ENCODE measurements at regions of chr6 and their contacts with region 1.

Region 1: DNA sequence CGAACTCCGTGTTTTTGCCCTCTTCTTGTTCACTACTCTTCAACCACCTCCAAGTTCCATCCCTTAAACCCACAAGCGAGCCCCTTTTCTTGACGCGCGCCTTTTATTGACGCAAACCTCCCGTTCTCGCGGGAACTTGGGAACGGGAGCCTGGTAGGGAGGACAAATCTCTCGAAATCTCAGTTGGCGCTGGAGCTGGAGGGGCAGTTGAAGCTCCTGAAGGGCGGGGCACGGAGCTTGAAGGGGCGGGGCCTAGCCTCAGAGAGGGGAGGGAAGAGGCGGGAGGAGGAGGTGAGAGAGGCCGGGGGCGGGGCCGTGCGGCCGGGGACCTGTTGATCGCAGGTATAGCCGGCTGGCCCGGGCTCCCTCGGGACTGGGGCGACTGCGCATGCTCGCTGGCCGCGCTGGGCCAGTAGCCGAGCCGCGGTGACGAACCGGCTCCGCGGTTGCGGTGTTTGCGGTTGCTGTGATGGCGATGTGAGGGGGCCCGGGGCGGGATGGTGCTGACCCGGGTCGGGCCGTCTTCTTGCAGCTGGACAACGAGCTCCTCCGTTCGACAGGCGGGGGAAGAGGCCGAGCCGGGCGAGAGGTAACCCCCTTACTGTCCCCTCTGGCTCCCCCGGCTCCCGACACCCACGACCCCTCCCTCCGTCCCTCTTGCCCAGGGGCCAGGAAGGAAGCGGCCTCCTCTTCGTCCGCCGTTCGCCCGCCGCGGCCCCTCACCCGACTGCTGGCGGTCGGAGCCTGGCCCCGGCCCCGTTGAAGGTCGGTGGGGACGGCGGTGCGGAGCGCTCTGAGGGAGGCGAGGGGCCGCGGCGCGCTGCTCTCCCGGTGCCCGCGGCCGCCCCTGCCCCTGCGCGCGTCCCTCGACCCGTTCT is at the start of gene FAM135A:
- DNase-seq: peak; percentile 99 to 100
- H3K4me3 ChIP-seq: peak within 1 kb of the TSS; percentile 91 to 100 (median 100)
- H3K27ac ChIP-seq: peak within 1 kb of the TSS; percentile 94
- H3K4me1 ChIP-seq: no peaks in the 10 kb centered on the region; a peak in 1 of 7 replicates
- H3K27me3 ChIP-seq: no peaks in the 10 kb centered on the region
- CTCF ChIP-seq: no peak
- EP300 ChIP-seq: no peak
- POLR2A ChIP-seq: peak; percentile 99 to 100
- RAD21 ChIP-seq: no peak
- total RNA-seq, gene FAM135A: 34.7 and 35.7 TPM in 2 replicates

Region 2: DNA sequence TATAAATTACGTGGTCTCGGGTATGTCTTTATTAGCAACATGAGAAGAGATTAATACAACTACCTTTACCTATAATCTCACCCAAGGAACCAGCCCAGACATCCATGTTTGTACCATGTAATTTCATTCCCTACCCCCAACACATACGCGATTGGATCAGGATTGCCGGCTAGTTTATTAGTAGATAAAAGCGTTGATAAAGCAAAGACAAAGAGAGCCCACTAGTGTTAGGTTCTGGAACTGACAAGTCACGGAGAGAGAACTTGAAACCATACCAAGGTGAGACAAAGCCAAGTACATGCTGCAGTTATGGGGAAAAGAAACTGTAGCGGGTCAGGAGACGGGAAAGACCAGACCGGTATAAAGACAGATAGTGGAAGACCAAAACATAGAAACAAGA is 37.5 kb before region 1 on chr6:
- CTCF ChIA-PET with region 1: interaction called, 3 read pairs
- POLR2A ChIA-PET with region 1: interaction called, 11 read pairs
- DNase-seq: peak in 1 of 2 experiments; percentile 47
- H3K4me3 ChIP-seq: no peak overlapping the region
- H3K27ac ChIP-seq: no peak overlapping the region
- H3K4me1 ChIP-seq: no peaks in the 10 kb centered on the region; a peak in 1 of 7 replicates
- H3K27me3 ChIP-seq: no peaks in the 10 kb centered on the region
- CTCF ChIP-seq: peak in 2 of 3 experiments; percentile 40 to 67; a peak in 3 of 4 replicates
- EP300 ChIP-seq: no peak
- POLR2A ChIP-seq: no peak
- RAD21 ChIP-seq: peak; percentile 56 to 62

Region 3: GRCh38 chr6:70398783-70399728 is 14.3 kb before region 1 on chr6:
- CTCF ChIA-PET with region 1: no interaction called
- POLR2A ChIA-PET with region 1: interaction called, 25 read pairs
- DNase-seq: no peak
- H3K4me3 ChIP-seq: no peak overlapping the region
- H3K27ac ChIP-seq: no peak overlapping the region
- H3K4me1 ChIP-seq: peaks cover 0 to 3% (median 0%) of the 10 kb centered on the region in 4 experiments; a peak in 2 of 7 replicates
- H3K27me3 ChIP-seq: no peaks in the 10 kb centered on the region
- CTCF ChIP-seq: no peak
- EP300 ChIP-seq: no peak
- POLR2A ChIP-seq: no peak
- RAD21 ChIP-seq: no peak

Region 4: GRCh38 chr6:70423189-70424134 is 10.1 kb after region 1 on chr6:
- CTCF ChIA-PET with region 1: no interaction called
- POLR2A ChIA-PET with region 1: interaction called, 17 read pairs
- DNase-seq: no peak
- H3K4me3 ChIP-seq: no peak overlapping the region
- H3K27ac ChIP-seq: no peak overlapping the region
- H3K4me1 ChIP-seq: no peaks in the 10 kb centered on the region
- H3K27me3 ChIP-seq: no peaks in the 10 kb centered on the region
- CTCF ChIP-seq: no peak
- EP300 ChIP-seq: no peak
- POLR2A ChIP-seq: no peak
- RAD21 ChIP-seq: no peak

Region 5: GRCh38 chr6:70474751-70475150 is 61.4 kb after region 1 on chr6:
- CTCF ChIA-PET with region 1: no interaction called
- POLR2A ChIA-PET with region 1: interaction called, 11 read pairs
- DNase-seq: peak in 1 of 2 experiments; percentile 15
- H3K4me3 ChIP-seq: no peak overlapping the region
- H3K27ac ChIP-seq: peak overlapping the region; percentile 86
- H3K4me1 ChIP-seq: peaks cover 0 to 7% (median 2%) of the 10 kb centered on the region in 4 experiments; a peak in 3 of 7 replicates
- H3K27me3 ChIP-seq: no peaks in the 10 kb centered on the region
- CTCF ChIP-seq: no peak
- EP300 ChIP-seq: no peak
- POLR2A ChIP-seq: no peak
- RAD21 ChIP-seq: no peak

Measured in H1 (cell line).